Activated T-helper 1 cell treated with anti-CD3 and anti-CD28 coated beads, Interleukin-12 subunit alpha, Interleukin-12 subunit beta, Interleukin-2, Interleukin-4 antibody, amounts not matched to agents 30 ng/mL and 10 ng/mL and 1 ng/mL, durations not matched to agents 14 hours and 24 hours and 36 hours (primary cell): ENCODE measurements at regions of chr12 and their contacts with region 1.

Region 1: DNA sequence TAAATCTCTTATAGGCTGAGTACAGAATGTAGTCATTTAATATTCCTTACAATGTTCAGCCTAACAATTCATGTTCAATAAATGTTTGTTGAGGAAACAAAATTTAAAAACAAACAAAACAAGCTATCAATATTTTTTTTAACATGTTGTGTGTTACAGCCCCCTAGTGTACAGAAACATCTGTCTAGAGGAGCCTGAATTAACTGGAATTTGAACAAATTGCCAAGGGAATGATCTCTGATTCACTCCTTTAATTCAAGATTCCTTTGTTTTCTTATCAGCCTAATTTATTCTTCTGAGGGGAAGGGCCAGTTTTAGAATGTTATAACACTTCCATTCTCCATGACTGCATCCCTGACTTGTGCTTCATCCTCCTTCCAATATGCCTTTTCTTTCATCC is 127.2 kb downstream of the CMAS start:
- DNase-seq: no peak
- H3K4me3 Mint-ChIP-seq: no peak overlapping the region
- H3K27ac Mint-ChIP-seq: no peak overlapping the region
- H3K4me1 Mint-ChIP-seq: no peaks in the 10 kb centered on the region
- H3K27me3 Mint-ChIP-seq: peaks cover 4% of the 10 kb centered on the region

Region 2: DNA sequence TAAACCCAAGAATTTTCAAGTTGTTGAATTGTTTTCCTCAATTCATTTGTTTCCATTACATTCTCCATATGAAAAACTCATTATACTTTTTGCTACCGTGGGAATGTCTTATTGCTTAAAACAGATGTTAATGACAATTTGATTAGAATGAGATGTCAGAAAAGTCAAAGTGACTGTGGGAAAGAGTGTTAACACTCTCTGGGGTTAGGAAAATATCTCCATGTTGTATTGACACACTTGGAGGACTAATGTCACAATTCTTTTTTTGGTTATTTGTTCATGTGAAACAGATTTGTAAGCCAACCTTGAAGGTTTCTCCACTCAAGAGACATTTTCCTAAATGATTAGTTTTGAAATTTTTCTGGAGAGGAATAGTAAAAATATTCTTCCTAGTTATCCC is 174.4 kb before region 1 on chr12:
- intact Hi-C with region 1: no loop called
- DNase-seq: no peak
- H3K4me3 Mint-ChIP-seq: no peak overlapping the region
- H3K27ac Mint-ChIP-seq: no peak overlapping the region
- H3K4me1 Mint-ChIP-seq: no peaks in the 10 kb centered on the region
- H3K27me3 Mint-ChIP-seq: peaks cover 2% of the 10 kb centered on the region

Region 3: DNA sequence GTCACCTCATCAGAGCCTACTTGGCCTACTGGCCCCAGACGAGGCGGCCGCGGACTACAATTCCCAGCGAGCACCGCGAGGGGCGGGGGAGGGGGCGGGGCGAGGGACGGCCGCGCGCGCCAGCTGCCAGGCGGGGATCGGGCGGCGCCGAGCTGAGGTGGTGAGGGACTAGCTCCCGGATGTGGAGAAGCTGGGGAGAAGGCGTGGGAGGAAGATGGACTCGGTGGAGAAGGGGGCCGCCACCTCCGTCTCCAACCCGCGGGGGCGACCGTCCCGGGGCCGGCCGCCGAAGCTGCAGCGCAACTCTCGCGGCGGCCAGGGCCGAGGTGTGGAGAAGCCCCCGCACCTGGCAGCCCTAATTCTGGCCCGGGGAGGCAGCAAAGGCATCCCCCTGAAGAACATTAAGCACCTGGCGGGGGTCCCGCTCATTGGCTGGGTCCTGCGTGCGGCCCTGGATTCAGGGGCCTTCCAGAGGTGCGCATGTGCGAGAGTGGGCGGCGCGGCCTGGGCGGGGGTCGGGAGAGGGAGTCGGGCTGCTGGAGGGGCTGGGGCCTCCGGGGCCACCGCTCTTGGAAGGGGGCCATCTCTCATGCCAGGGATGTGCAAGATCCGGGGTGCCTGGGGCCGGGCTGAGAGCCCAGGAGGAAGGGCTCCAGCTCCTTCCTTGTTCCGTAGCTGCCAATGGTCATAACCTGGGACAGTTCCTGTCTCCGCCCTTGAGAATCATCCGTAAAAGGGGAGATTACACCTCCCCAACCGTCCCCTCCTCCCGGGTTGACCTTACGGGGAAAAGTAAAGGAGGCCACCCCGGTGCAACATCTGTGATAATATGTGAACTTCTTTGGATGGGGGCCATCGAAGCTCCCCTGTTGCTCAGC is 126.8 kb before region 1 on chr12 and contains the start of gene CMAS:
- intact Hi-C with region 1: no loop called
- DNase-seq: peak; percentile 70
- H3K4me3 Mint-ChIP-seq: peak within 1 kb of the TSS; percentile 95
- H3K27ac Mint-ChIP-seq: peak within 1 kb of the TSS; percentile 88
- H3K4me1 Mint-ChIP-seq: peaks cover 48% of the 10 kb centered on the region
- H3K27me3 Mint-ChIP-seq: no peaks in the 10 kb centered on the region
- total RNA-seq, gene CMAS: 34.1 and 34.9 TPM in 2 replicates

Region 4: DNA sequence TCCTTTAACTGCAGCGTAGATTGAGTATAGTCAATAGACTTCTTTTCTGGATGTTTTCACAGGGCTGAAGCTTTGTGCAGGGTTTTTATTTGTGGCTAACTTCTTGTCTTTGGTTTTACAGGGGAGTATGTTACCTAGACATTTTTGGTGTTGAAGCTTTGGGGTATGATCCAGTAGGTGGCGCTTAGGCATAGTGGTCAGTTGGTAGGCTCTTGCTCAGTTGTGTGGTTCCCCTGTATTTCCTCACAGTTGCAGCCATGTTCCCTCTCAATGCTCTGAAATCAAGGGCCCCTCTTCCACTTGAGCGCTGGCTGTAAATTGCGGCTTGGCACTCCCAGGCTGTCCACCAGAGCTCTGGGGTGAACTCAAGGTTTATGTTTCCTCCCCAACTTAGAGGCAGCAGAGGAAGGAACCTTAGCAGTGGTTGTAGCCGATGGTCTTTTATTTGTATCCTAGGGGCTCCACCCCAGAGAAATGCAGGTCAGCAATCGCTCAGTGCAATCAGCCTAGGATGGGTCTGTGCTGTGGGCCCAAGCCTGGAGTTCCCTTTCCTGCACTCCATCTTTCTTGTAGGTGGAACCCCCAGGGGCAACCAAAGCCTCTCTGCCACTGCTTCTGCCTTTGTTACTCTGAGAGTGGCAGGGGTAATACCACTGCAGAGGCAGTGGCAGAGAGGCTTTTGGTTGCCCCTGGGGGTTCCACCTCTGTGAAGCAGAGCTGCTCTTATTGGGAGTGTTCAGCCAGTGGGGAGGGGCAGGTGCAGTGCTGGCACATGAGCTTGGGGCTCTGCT is 72.0 kb before region 1 on chr12:
- intact Hi-C with region 1: loop called (anchors 5 kb)
- DNase-seq: peak; percentile 25
- H3K4me3 Mint-ChIP-seq: no peak overlapping the region
- H3K27ac Mint-ChIP-seq: no peak overlapping the region
- H3K4me1 Mint-ChIP-seq: peaks cover 7% of the 10 kb centered on the region
- H3K27me3 Mint-ChIP-seq: peaks cover 12% of the 10 kb centered on the region